Activated T-helper 1 cell treated with anti-CD3 and anti-CD28 coated beads, Interleukin-12 subunit alpha, Interleukin-12 subunit beta, Interleukin-2, Interleukin-4 antibody, amounts not matched to agents 30 ng/mL and 10 ng/mL and 1 ng/mL, durations not matched to agents 14 hours and 24 hours and 36 hours (primary cell): ENCODE measurements at regions of chr12 and their contacts with region 1.

Region 1: DNA sequence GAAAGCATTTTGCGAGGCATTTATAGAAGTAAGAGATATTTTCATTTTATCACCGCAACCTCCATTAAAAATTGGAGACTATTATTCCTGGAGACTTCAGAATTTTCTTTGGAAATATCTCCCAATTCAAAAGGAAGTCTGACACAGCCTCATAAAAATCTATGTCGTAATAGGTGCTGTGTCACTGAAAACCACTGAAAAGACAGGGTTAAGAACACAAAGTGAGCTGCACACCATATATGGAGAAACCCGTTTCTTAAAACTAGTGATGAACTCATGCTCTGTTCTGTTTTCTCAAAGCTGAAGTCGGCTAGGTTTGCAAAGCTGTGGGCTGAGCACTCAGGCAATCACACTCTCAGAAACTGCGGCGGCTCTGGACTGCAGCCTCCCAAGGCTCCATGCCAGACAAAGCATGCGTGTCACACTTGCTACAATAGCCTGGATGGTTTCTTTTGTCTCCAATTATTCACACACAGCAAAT is at the start of gene GLIPR1:
- DNase-seq: peak; percentile 70
- H3K4me3 Mint-ChIP-seq: peak within 1 kb of the TSS; percentile 89
- H3K27ac Mint-ChIP-seq: peak within 1 kb of the TSS; percentile 98
- H3K4me1 Mint-ChIP-seq: peaks cover 83% of the 10 kb centered on the region
- H3K27me3 Mint-ChIP-seq: peaks cover 2% of the 10 kb centered on the region
- total RNA-seq, gene GLIPR1: 7.3 and 7.6 TPM in 2 replicates

Region 2: DNA sequence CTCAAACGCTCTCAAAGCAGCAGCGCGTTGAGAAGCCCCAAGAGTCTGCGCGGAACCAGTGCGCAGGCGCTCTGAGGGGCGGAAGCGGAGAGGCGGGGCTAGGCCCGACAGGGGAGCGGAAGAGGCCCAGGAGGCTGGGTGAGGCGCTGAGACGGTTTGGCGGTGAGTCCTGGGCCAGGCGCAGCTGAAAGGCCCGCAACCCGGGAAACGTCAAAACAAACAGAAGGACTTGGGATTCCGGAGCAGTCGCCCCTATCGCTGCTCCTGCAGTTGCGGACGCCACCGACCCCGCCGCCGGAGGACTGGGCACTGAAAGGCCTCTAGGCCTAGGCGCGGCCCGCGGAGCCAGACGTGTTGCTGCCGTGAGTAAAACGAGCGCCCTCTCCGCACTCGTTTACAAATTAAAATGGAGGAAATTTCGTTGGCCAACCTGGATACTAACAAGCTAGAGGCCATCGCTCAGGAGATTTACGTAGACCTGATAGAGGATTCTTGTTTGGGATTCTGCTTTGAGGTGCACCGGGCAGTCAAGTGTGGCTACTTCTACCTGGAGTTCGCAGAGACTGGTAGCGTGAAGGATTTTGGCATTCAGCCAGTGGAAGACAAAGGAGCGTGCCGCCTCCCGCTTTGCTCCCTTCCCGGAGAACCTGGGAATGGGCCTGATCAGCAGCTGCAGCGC is 942.7 kb before region 1 on chr12 and contains the start of gene ATXN7L3B:
- intact Hi-C with region 1: loop called (anchors 5 kb)
- DNase-seq: peak; percentile 93
- H3K4me3 Mint-ChIP-seq: peak within 1 kb of the TSS; percentile 92
- H3K27ac Mint-ChIP-seq: peak within 1 kb of the TSS; percentile 97
- H3K4me1 Mint-ChIP-seq: peaks cover 55% of the 10 kb centered on the region
- H3K27me3 Mint-ChIP-seq: peaks cover 2% of the 10 kb centered on the region
- total RNA-seq, gene ATXN7L3B: 24.8 and 25.4 TPM in 2 replicates

Region 3: GRCh38 chr12:75437564-75437963 is 42.9 kb before region 1 on chr12:
- intact Hi-C with region 1: loop called (anchors 2 kb)
- DNase-seq: no peak
- H3K4me3 Mint-ChIP-seq: no peak overlapping the region
- H3K27ac Mint-ChIP-seq: no peak overlapping the region
- H3K4me1 Mint-ChIP-seq: peaks cover 10% of the 10 kb centered on the region
- H3K27me3 Mint-ChIP-seq: peaks cover 2% of the 10 kb centered on the region

Region 4: GRCh38 chr12:75913502-75914351 is 433.2 kb after region 1 on chr12:
- intact Hi-C with region 1: loop called (anchors 1 kb)
- DNase-seq: no peak
- H3K4me3 Mint-ChIP-seq: no peak overlapping the region
- H3K27ac Mint-ChIP-seq: peak overlapping the region; percentile 79
- H3K4me1 Mint-ChIP-seq: peaks cover 34% of the 10 kb centered on the region
- H3K27me3 Mint-ChIP-seq: peaks cover 1% of the 10 kb centered on the region

Region 5: GRCh38 chr12:76020731-76021672 is 540.5 kb after region 1 on chr12:
- intact Hi-C with region 1: loop called (anchors 2 kb)
- DNase-seq: peak; percentile 68
- H3K4me3 Mint-ChIP-seq: peak overlapping the region; percentile 74
- H3K27ac Mint-ChIP-seq: peak overlapping the region; percentile 99
- H3K4me1 Mint-ChIP-seq: peaks cover 73% of the 10 kb centered on the region
- H3K27me3 Mint-ChIP-seq: no peaks in the 10 kb centered on the region

Region 6: GRCh38 chr12:76277480-76277879 is 797.0 kb after region 1 on chr12:
- intact Hi-C with region 1: loop called (anchors 10 kb)
- DNase-seq: no peak
- H3K4me3 Mint-ChIP-seq: no peak overlapping the region
- H3K27ac Mint-ChIP-seq: no peak overlapping the region
- H3K4me1 Mint-ChIP-seq: peaks cover 15% of the 10 kb centered on the region
- H3K27me3 Mint-ChIP-seq: peaks cover 6% of the 10 kb centered on the region

Region 7: DNA sequence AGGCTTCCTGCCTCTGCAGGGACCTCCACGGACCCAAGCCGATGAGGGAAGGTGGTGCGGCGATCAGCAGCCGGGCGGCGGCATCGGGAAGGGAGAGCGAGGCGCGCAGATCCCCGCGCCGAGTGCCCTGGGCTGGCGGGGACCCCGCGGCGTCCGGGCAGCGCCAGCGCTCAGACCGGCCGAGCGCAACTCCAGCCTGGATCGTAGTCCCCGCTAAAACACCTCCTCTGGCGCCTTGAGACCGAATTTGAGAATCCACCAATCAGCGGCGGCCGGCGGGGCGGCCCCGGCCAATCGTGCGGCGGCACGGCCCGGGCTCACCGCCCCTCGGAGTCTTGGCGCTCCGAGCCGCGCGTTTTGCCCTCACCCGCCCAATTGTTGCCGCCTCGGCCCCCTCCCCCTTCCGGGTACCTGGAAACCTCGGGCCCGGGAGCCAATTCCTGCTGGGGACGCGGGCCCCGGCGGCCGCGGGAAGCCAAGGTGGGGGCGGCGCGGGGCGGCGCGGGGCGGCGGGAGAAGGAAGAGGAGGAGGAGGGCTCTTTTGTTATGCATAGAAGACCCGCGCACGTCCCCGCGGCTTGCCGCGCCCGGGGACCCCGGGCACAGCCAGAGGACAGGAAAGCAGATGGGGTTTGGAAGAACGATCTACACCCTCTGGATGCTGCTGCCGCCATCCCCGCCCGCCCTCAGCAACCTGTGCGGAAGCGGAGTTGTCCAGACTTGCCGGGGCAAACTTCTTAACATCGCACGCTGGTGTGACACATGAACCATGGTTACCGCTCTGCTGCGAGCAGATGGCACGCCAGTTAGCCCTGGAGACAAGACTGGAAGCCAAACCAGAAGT is 1585.1 kb after region 1 on chr12 and contains the start of gene E2F7:
- intact Hi-C with region 1: loop called (anchors 10 kb)
- DNase-seq: peak; percentile 87
- H3K4me3 Mint-ChIP-seq: peak within 1 kb of the TSS; percentile 94
- H3K27ac Mint-ChIP-seq: peak within 1 kb of the TSS; percentile 73
- H3K4me1 Mint-ChIP-seq: peaks cover 42% of the 10 kb centered on the region
- H3K27me3 Mint-ChIP-seq: peaks cover 12% of the 10 kb centered on the region
- total RNA-seq, gene E2F7: 16.6 and 16.9 TPM in 2 replicates